PC-3 (cell line): ENCODE measurements at regions of chr14 and their contacts with region 1.

Region 1: DNA sequence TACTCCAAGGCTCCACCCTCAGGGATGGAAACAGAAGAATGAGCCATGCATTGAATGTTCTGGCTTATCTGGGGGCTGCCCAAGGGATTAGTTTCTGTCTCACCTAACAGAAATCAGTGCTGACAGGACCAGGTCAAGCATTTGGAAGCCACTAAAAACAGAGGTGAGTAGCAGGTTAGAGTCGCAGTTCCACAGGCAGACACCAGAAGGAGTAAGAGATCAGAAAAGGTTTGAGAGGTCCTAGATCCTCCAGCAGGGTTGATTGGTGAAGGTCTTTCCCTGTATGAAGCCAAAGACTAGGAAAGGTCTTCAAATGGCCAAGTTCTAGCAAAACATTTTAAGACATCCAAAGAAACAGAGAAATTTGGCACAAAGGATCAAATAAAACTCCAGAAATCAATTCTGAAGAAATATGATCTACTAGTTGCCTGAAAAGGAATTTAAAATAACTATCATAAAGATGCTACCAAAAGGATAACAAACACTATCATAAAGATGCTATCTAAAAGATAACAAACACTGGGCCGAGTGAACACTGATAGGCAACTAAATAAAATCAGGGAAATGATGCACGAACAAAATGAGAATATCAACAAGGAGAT is 19.5 kb upstream of the TTC9 start:
- DNase-seq: peak; percentile 82
- ATAC-seq: peak; percentile 99
- H3K4me3 ChIP-seq: no peak overlapping the region
- H3K27ac ChIP-seq: no peak overlapping the region
- H3K4me1 ChIP-seq: peaks cover 5% of the 10 kb centered on the region; the same call in 1 of the 2 replicates
- H3K27me3 ChIP-seq: no peaks in the 10 kb centered on the region
- CTCF ChIP-seq: peak; percentile 94

Region 2: GRCh38 chr14:69741055-69741454 is 881.2 kb before region 1 on chr14:
- CTCF ChIA-PET with region 1: no interaction called
- POLR2A ChIA-PET with region 1: no interaction called
- intact Hi-C with region 1: no loop called
- DNase-seq: peak; percentile 92
- ATAC-seq: peak; percentile 92
- H3K4me3 ChIP-seq: no peak overlapping the region
- H3K27ac ChIP-seq: peak overlapping the region; percentile 40; the same call in 1 of the 2 replicates
- H3K4me1 ChIP-seq: peaks cover 25% of the 10 kb centered on the region
- H3K27me3 ChIP-seq: no peaks in the 10 kb centered on the region
- CTCF ChIP-seq: no peak

Region 3: DNA sequence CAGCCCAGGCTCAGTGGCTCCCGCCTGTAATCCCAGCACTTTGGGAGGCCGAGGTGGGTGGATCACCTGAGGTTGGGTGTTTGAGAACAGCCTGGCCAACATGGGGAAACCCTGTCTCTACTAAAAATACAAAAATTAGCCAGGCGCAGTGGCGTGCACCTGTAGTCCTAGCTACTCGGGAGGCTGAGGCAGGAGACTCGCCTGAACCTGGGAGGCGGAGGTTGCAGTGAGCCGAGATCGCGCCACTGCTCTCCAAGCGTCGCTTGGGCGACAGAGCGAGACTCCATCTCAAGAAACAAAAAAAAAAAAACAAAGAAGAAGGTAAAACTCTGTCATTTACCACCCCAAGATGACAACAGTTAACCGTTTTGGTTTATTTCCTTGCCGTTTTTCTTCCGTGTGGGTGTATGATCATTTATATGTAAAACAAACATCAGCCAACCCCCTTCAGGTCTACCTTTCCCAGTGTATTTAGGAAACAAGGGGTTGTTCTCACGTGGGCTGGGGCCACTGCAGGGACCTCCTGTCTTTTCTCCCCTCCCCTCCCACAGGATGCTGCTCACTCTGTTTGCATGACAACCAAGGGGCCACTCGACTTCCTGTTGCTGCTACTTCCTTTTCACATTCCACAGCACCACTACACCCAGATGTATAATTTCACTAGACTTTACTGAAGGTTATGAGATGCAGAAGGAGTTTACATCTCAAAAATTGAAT is 33.1 kb after region 1 on chr14:
- CTCF ChIA-PET with region 1: interaction called, 10 read pairs
- POLR2A ChIA-PET with region 1: no interaction called
- intact Hi-C with region 1: no loop called
- DNase-seq: no peak
- ATAC-seq: peak; percentile 50; the same call in 1 of the 2 replicates
- H3K4me3 ChIP-seq: no peak overlapping the region
- H3K27ac ChIP-seq: no peak overlapping the region
- H3K4me1 ChIP-seq: no peaks in the 10 kb centered on the region
- H3K27me3 ChIP-seq: no peaks in the 10 kb centered on the region
- CTCF ChIP-seq: no peak

Region 4: GRCh38 chr14:70707138-70708038 is 85.2 kb after region 1 on chr14:
- CTCF ChIA-PET with region 1: no interaction called
- POLR2A ChIA-PET with region 1: no interaction called
- intact Hi-C with region 1: no loop called
- DNase-seq: peak; percentile 88
- ATAC-seq: peak; percentile 98
- H3K4me3 ChIP-seq: no peak overlapping the region
- H3K27ac ChIP-seq: peak overlapping the region; percentile 60
- H3K4me1 ChIP-seq: peaks cover 23% of the 10 kb centered on the region
- H3K27me3 ChIP-seq: no peaks in the 10 kb centered on the region
- CTCF ChIP-seq: peak; percentile 15; the same call in 1 of the 2 replicates

Region 5: GRCh38 chr14:70972107-70972976 is 350.1 kb after region 1 on chr14:
- CTCF ChIA-PET with region 1: no interaction called
- POLR2A ChIA-PET with region 1: no interaction called
- intact Hi-C with region 1: loop called (anchors 1 kb)
- DNase-seq: peak; percentile 93
- ATAC-seq: peak; percentile 96
- H3K4me3 ChIP-seq: no peak overlapping the region
- H3K27ac ChIP-seq: no peak overlapping the region
- H3K4me1 ChIP-seq: no peaks in the 10 kb centered on the region
- H3K27me3 ChIP-seq: no peaks in the 10 kb centered on the region
- CTCF ChIP-seq: peak; percentile 97